ENCODE measurements at regions of chr9 and their contacts with region 1.

Region 1: GRCh38 chr9:93159601-93160471 is 24.1 kb upstream of the WNK2 start:
- DNase-seq: peak; percentile 76
- H3K4me3 Mint-ChIP-seq: no peak overlapping the region
- H3K27ac Mint-ChIP-seq: peak overlapping the region; percentile 22
- H3K4me1 Mint-ChIP-seq: peaks cover 20% of the 10 kb centered on the region
- H3K27me3 Mint-ChIP-seq: no peaks in the 10 kb centered on the region

Region 2: GRCh38 chr9:92877531-92878430 is 282.1 kb before region 1 on chr9 and contains the start of gene ZNF484:
- CTCF ChIA-PET with region 1: interaction called, 3 read pairs
- intact Hi-C with region 1: loop called (anchors 5 kb)
- DNase-seq: peak; percentile 99
- H3K4me3 Mint-ChIP-seq: peak within 1 kb of the TSS; percentile 87
- H3K27ac Mint-ChIP-seq: peak within 1 kb of the TSS; percentile 94
- H3K4me1 Mint-ChIP-seq: peaks cover 40% of the 10 kb centered on the region
- H3K27me3 Mint-ChIP-seq: no peaks in the 10 kb centered on the region
- total RNA-seq, gene ZNF484: 5.8 to 6.5 TPM

Region 3: GRCh38 chr9:93064392-93065134 is 95.3 kb before region 1 on chr9:
- CTCF ChIA-PET with region 1: no interaction called
- intact Hi-C with region 1: no loop called
- DNase-seq: peak; percentile 98
- H3K4me3 Mint-ChIP-seq: peak overlapping the region; percentile 86
- H3K27ac Mint-ChIP-seq: peak overlapping the region; percentile 99
- H3K4me1 Mint-ChIP-seq: peaks cover 91% of the 10 kb centered on the region
- H3K27me3 Mint-ChIP-seq: no peaks in the 10 kb centered on the region

Region 4: DNA sequence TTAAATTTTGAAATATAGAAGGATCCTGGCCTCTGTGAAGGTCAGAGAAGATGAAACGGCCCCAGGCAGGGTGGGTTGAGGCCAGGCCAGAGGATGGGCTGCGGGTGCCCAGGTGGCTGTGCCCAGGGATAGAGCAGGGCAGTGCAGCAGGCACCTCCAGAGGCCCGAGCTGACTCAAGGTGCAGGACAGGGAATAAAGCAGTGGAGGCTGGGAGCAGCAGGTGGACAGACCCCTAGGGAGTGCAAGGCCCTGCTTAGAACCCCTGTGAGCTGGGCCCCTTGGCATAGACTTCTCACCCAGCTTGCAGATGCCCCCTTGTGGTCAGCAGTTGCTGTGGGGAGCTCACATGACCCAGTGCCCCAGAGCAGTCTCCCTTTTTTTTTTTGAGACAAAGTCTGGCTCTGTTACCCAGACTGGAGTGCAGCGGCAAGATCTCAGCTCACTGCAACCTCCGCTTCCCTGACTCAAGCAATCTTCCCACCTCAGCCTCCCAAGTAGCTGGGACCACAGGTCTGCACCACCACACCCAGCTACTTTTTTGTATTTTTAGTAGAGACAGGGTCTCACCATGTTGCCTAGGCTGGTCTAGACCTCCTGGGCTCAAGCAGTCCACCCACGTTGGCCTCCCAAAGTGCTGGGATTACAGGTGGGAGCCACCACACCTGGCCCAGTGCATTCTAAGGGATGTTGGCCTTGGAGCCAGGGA is 142.9 kb after region 1 on chr9:
- CTCF ChIA-PET with region 1: interaction called, 7 read pairs
- intact Hi-C with region 1: loop called (anchors 1 kb)
- DNase-seq: peak; percentile 73
- H3K4me3 Mint-ChIP-seq: no peak overlapping the region
- H3K27ac Mint-ChIP-seq: no peak overlapping the region
- H3K4me1 Mint-ChIP-seq: no peaks in the 10 kb centered on the region
- H3K27me3 Mint-ChIP-seq: no peaks in the 10 kb centered on the region

Region 5: GRCh38 chr9:93468763-93469456 is 309.1 kb after region 1 on chr9:
- CTCF ChIA-PET with region 1: interaction called, 11 read pairs
- intact Hi-C with region 1: no loop called
- DNase-seq: no peak
- H3K4me3 Mint-ChIP-seq: no peak overlapping the region
- H3K27ac Mint-ChIP-seq: no peak overlapping the region
- H3K4me1 Mint-ChIP-seq: peaks cover 61% of the 10 kb centered on the region
- H3K27me3 Mint-ChIP-seq: no peaks in the 10 kb centered on the region

Region 6: DNA sequence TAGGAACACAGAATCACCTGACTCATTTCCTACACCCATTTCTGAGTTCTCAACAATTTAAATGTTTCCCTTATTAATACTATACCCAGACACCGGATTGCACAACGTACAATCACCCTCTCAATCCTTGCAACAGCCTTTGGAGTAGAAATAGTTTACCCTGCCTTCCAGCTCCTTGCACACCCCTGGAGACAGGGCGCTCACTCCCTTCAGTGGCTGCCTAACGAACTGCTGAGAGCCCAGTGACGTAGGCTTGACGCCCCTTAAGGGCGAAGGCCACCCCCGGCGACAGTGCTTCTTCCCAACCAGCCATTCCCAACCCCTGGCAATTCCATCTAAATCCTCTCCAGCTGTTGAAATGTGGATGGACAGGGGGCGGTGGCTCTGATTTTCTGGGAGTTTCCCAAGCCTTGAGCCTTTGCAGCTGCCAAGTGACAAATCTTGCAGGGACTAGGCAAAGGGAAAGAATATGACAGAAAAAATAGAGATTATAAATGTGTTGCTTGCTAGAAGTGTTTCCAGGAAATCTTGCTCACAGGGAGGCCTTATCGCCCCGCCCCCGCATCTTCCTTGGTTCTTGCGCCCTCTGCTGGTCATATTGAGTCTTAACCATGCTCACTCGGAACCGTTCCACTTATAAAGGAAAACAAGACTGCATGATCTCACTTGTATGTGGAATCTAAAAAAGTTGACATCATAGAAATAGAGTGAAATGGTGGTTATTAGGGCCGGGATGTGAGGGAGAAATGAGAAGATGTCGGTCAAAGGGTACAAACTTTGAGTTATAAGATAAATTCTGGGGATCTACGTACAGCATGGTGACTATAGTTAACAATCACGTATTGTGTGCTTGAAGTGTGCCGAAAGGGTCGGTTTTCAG is 803.0 kb after region 1 on chr9:
- CTCF ChIA-PET with region 1: no interaction called
- intact Hi-C with region 1: loop called (anchors 10 kb)
- DNase-seq: peak; percentile 92
- H3K4me3 Mint-ChIP-seq: no peak overlapping the region
- H3K27ac Mint-ChIP-seq: no peak overlapping the region
- H3K4me1 Mint-ChIP-seq: peaks cover 35% of the 10 kb centered on the region
- H3K27me3 Mint-ChIP-seq: peaks cover 40% of the 10 kb centered on the region